ENCODE measurements at regions of chr2 and their contacts with region 1.

Region 1: DNA sequence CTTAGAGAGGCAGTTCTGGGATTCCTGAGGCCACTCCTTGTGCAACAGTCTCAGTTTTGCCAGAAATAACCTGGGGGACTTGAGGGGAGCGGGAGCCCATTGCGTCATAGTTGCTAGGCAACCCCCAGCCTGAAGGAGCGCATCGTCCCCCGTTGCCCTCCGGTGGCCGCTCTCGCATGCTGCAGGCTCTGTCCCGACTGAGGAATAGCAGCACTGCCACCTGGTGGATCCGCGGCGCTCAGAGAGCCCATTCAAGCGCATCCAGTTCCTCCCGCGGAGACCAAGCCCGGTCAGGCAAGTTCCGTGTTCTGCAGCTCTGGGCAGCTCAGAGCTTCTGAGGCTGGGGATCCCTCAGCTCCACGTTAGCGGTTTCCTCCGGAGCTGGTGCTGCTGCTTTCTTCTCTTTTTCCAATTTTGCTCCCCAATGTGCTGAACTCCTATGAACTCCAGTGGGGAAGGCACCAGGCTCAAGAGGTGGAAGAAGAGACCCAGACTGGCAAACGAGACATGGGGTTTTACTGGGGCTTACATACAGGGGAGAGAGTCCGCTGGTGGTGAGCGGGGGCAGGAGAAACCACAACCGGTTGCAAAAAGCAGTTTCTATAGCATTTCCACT is 15.1 kb downstream of the SLC4A3 start:
- DNase-seq: peak; percentile 87 to 95 (median 88)
- ATAC-seq: peak; percentile 95
- H3K4me3 ChIP-seq: no peak overlapping the region
- H3K27ac ChIP-seq: no peak overlapping the region; the same call in 2 of the 3 replicates
- H3K4me1 ChIP-seq: peaks cover 28 to 43% of the 10 kb centered on the region in 2 experiments; a peak in 4 of 5 replicates
- H3K27me3 ChIP-seq: peaks cover 0 to under 1% of the 10 kb centered on the region in 2 experiments; a peak in 1 of 5 replicates
- CTCF ChIP-seq: peak; percentile 99 to 100 (median 100)
- EP300 ChIP-seq: 0 out of 2 replicates have a peak, but pooled peaks have one; percentile 15
- POLR2A ChIP-seq: no peak
- RAD21 ChIP-seq: peak; percentile 98

Region 2: GRCh38 chr2:219402665-219403515 is 239.7 kb before region 1 on chr2:
- CTCF ChIA-PET with region 1: interaction called, 5 read pairs
- POLR2A ChIA-PET with region 1: no interaction called
- in situ Hi-C with region 1: no loop called
- intact Hi-C with region 1: loop called (anchors 5 kb)
- DNase-seq: peak; percentile 68 to 81 (median 72)
- ATAC-seq: peak; percentile 83
- H3K4me3 ChIP-seq: no peak overlapping the region
- H3K27ac ChIP-seq: no peak overlapping the region
- H3K4me1 ChIP-seq: peaks cover 17 to 18% of the 10 kb centered on the region in 2 experiments
- H3K27me3 ChIP-seq: no peaks in the 10 kb centered on the region
- CTCF ChIP-seq: peak; percentile 85 to 90 (median 89)
- EP300 ChIP-seq: no peak
- POLR2A ChIP-seq: no peak
- RAD21 ChIP-seq: peak; percentile 78 to 87

Region 3: GRCh38 chr2:219619235-219619634 is 23.3 kb before region 1 on chr2:
- CTCF ChIA-PET with region 1: no interaction called
- POLR2A ChIA-PET with region 1: no interaction called
- in situ Hi-C with region 1: no loop called
- intact Hi-C with region 1: loop called (anchors 1 kb)
- DNase-seq: peak in 2 of 4 experiments; percentile 35 to 40
- ATAC-seq: peak; percentile 85
- H3K4me3 ChIP-seq: no peak overlapping the region
- H3K27ac ChIP-seq: no peak overlapping the region
- H3K4me1 ChIP-seq: no peaks in the 10 kb centered on the region; a peak in 1 of 5 replicates
- H3K27me3 ChIP-seq: peaks cover 2 to 5% of the 10 kb centered on the region in 2 experiments; a peak in 1 of 5 replicates
- CTCF ChIP-seq: peak; percentile 39 to 54 (median 47); a peak in 5 of 6 replicates
- EP300 ChIP-seq: no peak
- POLR2A ChIP-seq: no peak
- RAD21 ChIP-seq: peak in 1 of 2 experiments; percentile 56; a peak in 2 of 4 replicates

Region 4: GRCh38 chr2:219689676-219690628 is 47.4 kb after region 1 on chr2:
- CTCF ChIA-PET with region 1: interaction called, 6 read pairs
- POLR2A ChIA-PET with region 1: no interaction called
- in situ Hi-C with region 1: loop called (anchors 5 kb)
- intact Hi-C with region 1: loop called (anchors 1 kb)
- DNase-seq: peak; percentile 58 to 79 (median 58)
- ATAC-seq: peak; percentile 74
- H3K4me3 ChIP-seq: no peak overlapping the region
- H3K27ac ChIP-seq: no peak overlapping the region
- H3K4me1 ChIP-seq: peaks cover 2 to 3% of the 10 kb centered on the region in 2 experiments; a peak in 2 of 5 replicates
- H3K27me3 ChIP-seq: no peaks in the 10 kb centered on the region
- CTCF ChIP-seq: peak; percentile 59 to 77 (median 76); a peak in 5 of 6 replicates
- EP300 ChIP-seq: no peak
- POLR2A ChIP-seq: no peak
- RAD21 ChIP-seq: peak; percentile 59 to 70

Region 5: GRCh38 chr2:219870041-219870440 is 227.5 kb after region 1 on chr2:
- CTCF ChIA-PET with region 1: no interaction called
- POLR2A ChIA-PET with region 1: no interaction called
- in situ Hi-C with region 1: no loop called
- intact Hi-C with region 1: no loop called
- DNase-seq: no peak
- ATAC-seq: no peak
- H3K4me3 ChIP-seq: no peak overlapping the region
- H3K27ac ChIP-seq: no peak overlapping the region
- H3K4me1 ChIP-seq: no peaks in the 10 kb centered on the region
- H3K27me3 ChIP-seq: no peaks in the 10 kb centered on the region
- CTCF ChIP-seq: no peak
- EP300 ChIP-seq: no peak
- POLR2A ChIP-seq: no peak
- RAD21 ChIP-seq: no peak